ENCODE measurements at regions of chr5 and their contacts with region 1.

Region 1: DNA sequence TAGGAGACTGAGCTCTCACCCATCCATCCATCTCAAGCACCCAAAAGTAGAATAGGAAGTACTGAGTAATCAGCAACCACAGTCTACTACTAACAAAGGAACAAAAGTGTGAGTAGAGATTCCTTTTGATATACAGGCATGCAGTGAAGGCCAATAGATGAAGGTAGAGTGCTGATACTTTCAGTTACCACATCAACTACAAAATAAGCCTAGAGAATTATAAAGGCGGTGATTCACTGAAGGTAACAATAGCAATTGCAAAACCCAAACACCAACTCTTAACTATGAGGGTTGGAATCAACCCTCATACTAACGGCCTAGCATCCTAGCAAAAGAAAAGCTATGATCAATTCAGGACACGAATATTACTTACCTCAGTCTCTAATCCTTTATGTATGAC is 992.6 kb downstream of the DNAH5 start:
- DNase-seq: no peak
- H3K4me3 ChIP-seq: no peak overlapping the region
- H3K27ac ChIP-seq: no peak overlapping the region
- H3K4me1 ChIP-seq: no peaks in the 10 kb centered on the region
- H3K27me3 ChIP-seq: no peaks in the 10 kb centered on the region
- CTCF ChIP-seq: no peak
- POLR2A ChIP-seq: no peak

Region 2: GRCh38 chr5:12995466-12995865 is 43.6 kb after region 1 on chr5:
- intact Hi-C with region 1: no loop called
- DNase-seq: no peak
- H3K4me3 ChIP-seq: no peak overlapping the region
- H3K27ac ChIP-seq: no peak overlapping the region
- H3K4me1 ChIP-seq: no peaks in the 10 kb centered on the region
- H3K27me3 ChIP-seq: no peaks in the 10 kb centered on the region
- CTCF ChIP-seq: no peak
- POLR2A ChIP-seq: no peak

Region 3: GRCh38 chr5:14063138-14063537 is 1111.3 kb after region 1 on chr5:
- intact Hi-C with region 1: loop called (anchors 10 kb)
- DNase-seq: no peak
- H3K4me3 ChIP-seq: no peak overlapping the region
- H3K27ac ChIP-seq: no peak overlapping the region
- H3K4me1 ChIP-seq: no peaks in the 10 kb centered on the region
- H3K27me3 ChIP-seq: no peaks in the 10 kb centered on the region
- CTCF ChIP-seq: no peak
- POLR2A ChIP-seq: no peak